T-cell (primary cell): ENCODE measurements at regions of chr12 and their contacts with region 1.

Region 1: GRCh38 chr12:110065540-110065939 is 17.2 kb upstream of the C12orf76 start:
- DNase-seq: no peak
- ATAC-seq: no peak
- H3K4me3 ChIP-seq: no peak overlapping the region
- H3K4me3 Mint-ChIP-seq: no peak overlapping the region
- H3K27ac ChIP-seq: no peak overlapping the region
- H3K27ac Mint-ChIP-seq: no peak overlapping the region
- H3K4me1 ChIP-seq: no peaks in the 10 kb centered on the region
- H3K4me1 Mint-ChIP-seq: no peaks in the 10 kb centered on the region
- H3K27me3 ChIP-seq: no peaks in the 10 kb centered on the region
- H3K27me3 Mint-ChIP-seq: no peaks in the 10 kb centered on the region

Region 2: GRCh38 chr12:110338754-110339153 is 273.2 kb after region 1 on chr12:
- CTCF ChIA-PET with region 1: no interaction called
- POLR2A ChIA-PET with region 1: interaction called in 1 of 2 experiments, 15 read pairs
- DNase-seq: no peak
- ATAC-seq: no peak
- H3K4me3 ChIP-seq: no peak overlapping the region
- H3K4me3 Mint-ChIP-seq: no peak overlapping the region
- H3K27ac ChIP-seq: no peak overlapping the region
- H3K27ac Mint-ChIP-seq: peak overlapping the region in 1 of 2 donors; percentile 60
- H3K4me1 ChIP-seq: no peaks in the 10 kb centered on the region
- H3K4me1 Mint-ChIP-seq: no peaks in the 10 kb centered on the region
- H3K27me3 ChIP-seq: no peaks in the 10 kb centered on the region
- H3K27me3 Mint-ChIP-seq: no peaks in the 10 kb centered on the region

Region 3: DNA sequence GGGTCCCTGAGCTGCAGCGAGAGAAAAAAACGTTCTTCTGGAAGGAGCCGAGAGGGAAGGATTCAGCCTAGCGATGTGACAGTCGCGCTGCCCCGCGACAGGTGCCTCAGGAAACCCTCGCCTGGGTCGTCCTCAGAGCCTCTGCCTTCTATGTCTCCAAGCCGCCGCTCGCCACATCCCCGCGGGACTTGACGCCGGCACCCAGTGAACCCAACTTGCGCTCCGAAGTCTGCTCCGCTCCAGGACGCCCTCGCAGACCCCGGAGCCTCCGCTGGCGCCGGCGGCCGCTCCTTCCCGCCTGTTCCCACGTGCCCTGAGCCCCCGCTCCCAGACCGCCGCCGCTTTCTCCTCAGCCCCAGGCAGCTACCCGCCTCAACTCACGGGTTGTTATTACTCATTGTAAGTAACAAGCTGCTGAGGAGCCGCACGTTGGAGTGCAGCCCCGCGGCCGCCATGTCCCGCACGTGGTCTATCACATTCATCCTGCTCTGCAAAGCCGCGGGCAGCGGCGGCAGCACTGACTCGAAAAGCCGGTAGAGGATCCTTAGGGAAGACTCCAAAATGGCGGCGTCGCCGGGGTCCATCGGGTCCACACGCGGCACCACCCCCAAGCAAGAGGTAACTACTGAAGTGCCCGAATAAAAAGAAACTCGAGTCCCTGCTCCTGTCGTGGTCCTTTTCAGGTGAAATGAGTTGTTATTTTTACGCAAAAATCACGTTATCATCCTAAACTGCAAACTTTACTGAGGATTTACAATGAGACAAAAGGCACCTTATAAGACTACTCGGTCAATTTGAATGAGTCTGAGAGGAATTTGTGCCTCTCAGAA is 337.8 kb after region 1 on chr12 and contains the start of gene ANAPC7:
- CTCF ChIA-PET with region 1: no interaction called
- POLR2A ChIA-PET with region 1: interaction called in 1 of 2 experiments, 11 read pairs
- DNase-seq: peak; percentile 68 to 91 (median 82)
- ATAC-seq: peak; percentile 89 to 95 (median 92)
- H3K4me3 ChIP-seq: peak within 1 kb of the TSS; percentile 81 to 94
- H3K4me3 Mint-ChIP-seq: peak within 1 kb of the TSS in 2 of 3 donors; percentile 98 to 99
- H3K27ac ChIP-seq: peak within 1 kb of the TSS; percentile 79
- H3K27ac Mint-ChIP-seq: peak within 1 kb of the TSS; percentile 99 to 100
- H3K4me1 ChIP-seq: peaks cover 8 to 26% of the 10 kb centered on the region in 2 experiments
- H3K4me1 Mint-ChIP-seq: peaks cover 37 to 44% (median 42%) of the 10 kb centered on the region in 3 donors
- H3K27me3 ChIP-seq: no peaks in the 10 kb centered on the region
- H3K27me3 Mint-ChIP-seq: no peaks in the 10 kb centered on the region
- total RNA-seq, gene ANAPC7: 40.8 to 60.4 (median 57.6) TPM